T-cell (primary cell): ENCODE measurements at regions of chr18 and their contacts with region 1.

Region 1: DNA sequence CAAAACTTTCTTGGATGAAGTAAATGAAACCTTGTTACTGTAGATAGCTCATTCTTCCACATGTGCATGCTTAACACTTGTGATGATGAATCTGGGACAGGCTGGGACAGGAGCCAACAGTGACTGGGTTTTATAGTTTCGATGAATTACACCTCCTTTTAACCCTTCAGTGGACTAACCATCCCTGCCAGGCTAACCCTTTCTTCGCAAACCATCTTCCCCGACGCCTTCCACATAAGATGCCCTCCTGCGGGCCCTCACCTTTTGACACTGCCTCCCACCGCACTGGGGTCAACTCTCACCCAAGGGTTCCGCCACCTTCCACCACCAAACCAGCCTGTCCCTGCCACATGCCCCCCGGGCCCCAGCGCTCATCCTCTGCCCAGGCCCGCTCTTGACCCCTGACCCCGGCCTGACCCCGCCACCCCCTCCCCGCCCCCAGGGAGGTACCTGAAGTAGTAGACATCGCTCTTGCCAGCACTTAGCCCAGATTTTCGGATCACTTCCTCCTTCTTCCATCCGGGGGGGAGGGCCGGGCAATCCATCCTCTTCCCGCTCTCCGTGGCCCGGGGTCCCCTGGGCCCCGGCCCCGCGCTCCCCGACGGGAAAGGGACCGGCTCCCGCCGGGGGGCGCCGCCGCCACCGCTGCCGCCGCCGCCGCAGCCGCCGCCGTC is 764 bp downstream of the MBD2 start:
- DNase-seq: peak in 33 of 35 experiments; percentile 7 to 68 (median 31)
- ATAC-seq: peak; percentile 4 to 19 (median 8)
- H3K4me3 ChIP-seq: peak overlapping the region; percentile 54
- H3K4me3 Mint-ChIP-seq: peak overlapping the region; percentile 91 to 94 (median 92)
- H3K27ac ChIP-seq: peak overlapping the region; percentile 65
- H3K27ac Mint-ChIP-seq: peak overlapping the region; percentile 90 to 91
- H3K4me1 ChIP-seq: peaks cover 15 to 28% of the 10 kb centered on the region in 2 experiments
- H3K4me1 Mint-ChIP-seq: peaks cover 44 to 51% (median 46%) of the 10 kb centered on the region in 3 donors
- H3K27me3 ChIP-seq: no peaks in the 10 kb centered on the region
- H3K27me3 Mint-ChIP-seq: no peaks in the 10 kb centered on the region

Region 2: GRCh38 chr18:54209471-54210180 is 14.1 kb before region 1 on chr18:
- CTCF ChIA-PET with region 1: interaction called, 4 to 11 read pairs
- POLR2A ChIA-PET with region 1: interaction called, 4 to 10 read pairs
- DNase-seq: no peak
- ATAC-seq: no peak
- H3K4me3 ChIP-seq: no peak overlapping the region
- H3K4me3 Mint-ChIP-seq: no peak overlapping the region
- H3K27ac ChIP-seq: no peak overlapping the region
- H3K27ac Mint-ChIP-seq: peak overlapping the region; percentile 11 to 47
- H3K4me1 ChIP-seq: peaks cover 5 to 7% of the 10 kb centered on the region in 2 experiments
- H3K4me1 Mint-ChIP-seq: peaks cover 64 to 69% (median 65%) of the 10 kb centered on the region in 3 donors
- H3K27me3 ChIP-seq: no peaks in the 10 kb centered on the region
- H3K27me3 Mint-ChIP-seq: no peaks in the 10 kb centered on the region

Region 3: DNA sequence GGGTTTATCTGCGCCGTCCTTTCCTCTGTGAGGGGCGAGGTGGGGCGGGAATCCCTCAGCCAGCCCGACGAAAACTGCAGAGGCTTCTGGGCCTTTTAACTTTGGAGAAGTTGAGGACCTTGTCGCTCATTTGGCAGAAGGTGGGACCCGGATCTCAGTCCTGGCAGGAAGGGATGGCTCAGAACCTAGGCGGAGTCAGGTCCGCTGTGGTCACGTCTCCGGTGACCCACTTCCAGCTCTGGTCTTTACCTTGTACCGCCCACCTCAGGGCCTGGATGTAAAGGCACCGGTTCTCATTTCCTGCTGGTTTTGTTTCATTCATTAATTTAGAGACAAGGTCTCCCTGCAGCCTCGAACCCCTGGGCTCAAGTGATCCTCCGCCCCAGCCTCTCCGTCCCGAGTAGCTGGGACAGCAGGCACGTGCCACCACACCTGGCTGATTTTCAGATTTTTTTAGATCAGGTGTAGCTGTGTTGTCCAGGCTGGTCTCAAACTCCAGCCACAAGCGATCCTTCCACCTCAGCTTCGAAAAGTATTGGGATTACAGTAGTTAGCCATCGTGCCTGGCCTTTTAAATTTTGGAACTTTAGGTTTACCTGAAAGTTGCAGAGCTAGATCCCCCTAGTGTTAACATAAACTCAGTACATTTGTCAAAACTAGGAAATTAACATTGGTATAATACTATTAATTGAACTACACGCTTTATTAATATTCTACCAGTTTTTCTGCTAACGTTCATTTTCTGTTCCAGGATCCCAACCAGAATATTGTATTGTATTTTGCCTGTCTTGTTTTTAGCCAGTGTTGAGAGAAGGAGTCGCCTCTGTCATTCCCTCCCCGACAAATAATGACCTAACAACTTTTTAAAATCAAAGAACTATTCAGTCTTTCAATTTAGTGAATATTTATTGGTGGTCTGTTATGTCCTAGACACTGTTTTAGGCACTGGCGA is 46.5 kb after region 1 on chr18:
- CTCF ChIA-PET with region 1: interaction called, 26 to 89 read pairs
- POLR2A ChIA-PET with region 1: interaction called, 3 to 10 read pairs
- DNase-seq: peak in 10 of 35 experiments; percentile 7 to 55 (median 14)
- ATAC-seq: peak; percentile 7 to 46 (median 41)
- H3K4me3 ChIP-seq: peak overlapping the region; percentile 86
- H3K4me3 Mint-ChIP-seq: peak overlapping the region; percentile 90 to 96 (median 92)
- H3K27ac ChIP-seq: peak overlapping the region; percentile 92
- H3K27ac Mint-ChIP-seq: peak overlapping the region; percentile 98
- H3K4me1 ChIP-seq: peaks cover 6 to 20% of the 10 kb centered on the region in 2 experiments
- H3K4me1 Mint-ChIP-seq: peaks cover 22 to 30% (median 23%) of the 10 kb centered on the region in 3 donors
- H3K27me3 ChIP-seq: no peaks in the 10 kb centered on the region
- H3K27me3 Mint-ChIP-seq: no peaks in the 10 kb centered on the region

Region 4: DNA sequence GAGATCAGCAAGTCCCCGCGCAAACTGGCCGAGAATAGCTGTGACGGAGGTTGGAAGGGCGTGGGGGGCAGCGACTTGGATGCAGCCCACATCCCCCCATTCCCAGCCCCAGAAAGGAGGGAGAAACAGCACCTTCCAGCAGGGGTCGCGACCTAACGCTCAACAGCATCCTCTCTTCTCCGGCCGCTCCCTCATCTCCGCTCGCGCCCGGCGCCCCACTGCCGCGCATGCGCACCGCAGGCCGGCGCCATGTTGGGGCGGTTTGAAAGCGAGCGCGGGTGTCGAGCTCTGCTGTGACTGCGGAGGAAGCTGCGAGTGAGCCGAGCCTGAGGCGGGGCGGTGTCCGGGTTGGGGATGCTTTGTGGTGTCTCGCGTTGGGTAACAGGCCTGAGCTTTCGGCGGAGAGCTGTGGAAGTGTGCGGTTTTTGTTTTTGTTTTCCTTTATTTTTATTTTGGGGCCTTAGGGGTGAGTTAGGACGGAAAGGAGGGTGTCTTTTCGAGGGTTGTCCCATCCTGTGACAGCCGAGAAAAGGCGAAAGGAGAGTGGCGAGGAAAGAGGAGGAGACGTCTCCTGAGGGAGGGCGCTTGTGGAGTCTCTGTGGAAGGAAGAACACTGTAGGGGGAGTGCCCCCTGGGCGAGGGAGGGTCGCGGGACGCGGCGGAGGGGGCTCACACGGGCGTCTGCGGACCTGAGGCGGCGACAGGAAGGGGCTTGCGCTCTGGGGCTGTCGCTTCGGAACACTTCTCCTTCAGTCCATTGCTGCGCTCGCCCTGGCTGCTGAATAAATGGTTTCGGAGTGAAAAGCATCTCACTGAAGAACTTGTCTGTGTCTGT is 134.2 kb after region 1 on chr18 and contains the starts of genes C18orf54 and STARD6:
- CTCF ChIA-PET with region 1: interaction called, 3 to 19 read pairs
- POLR2A ChIA-PET with region 1: interaction called in 1 of 2 experiments, 6 read pairs
- DNase-seq: peak; percentile 78 to 97 (median 86)
- ATAC-seq: peak; percentile 96 to 97 (median 96)
- H3K4me3 ChIP-seq: peak within 1 kb of the TSS; percentile 89 to 93
- H3K4me3 Mint-ChIP-seq: peak within 1 kb of the TSS; percentile 94 to 99 (median 95)
- H3K27ac ChIP-seq: peak within 1 kb of the TSS; percentile 70
- H3K27ac Mint-ChIP-seq: peak within 1 kb of the TSS; percentile 90 to 94
- H3K4me1 ChIP-seq: peaks cover 0 to 8% of the 10 kb centered on the region in 2 experiments
- H3K4me1 Mint-ChIP-seq: peaks cover 14 to 22% (median 20%) of the 10 kb centered on the region in 3 donors
- H3K27me3 ChIP-seq: peaks cover 0 to 4% of the 10 kb centered on the region in 2 experiments
- H3K27me3 Mint-ChIP-seq: peaks cover 0 to 4% of the 10 kb centered on the region in 2 donors
- total RNA-seq, gene C18orf54: 1.3 to 3.4 (median 2.7) TPM
- total RNA-seq, gene STARD6: not detected

Region 5: DNA sequence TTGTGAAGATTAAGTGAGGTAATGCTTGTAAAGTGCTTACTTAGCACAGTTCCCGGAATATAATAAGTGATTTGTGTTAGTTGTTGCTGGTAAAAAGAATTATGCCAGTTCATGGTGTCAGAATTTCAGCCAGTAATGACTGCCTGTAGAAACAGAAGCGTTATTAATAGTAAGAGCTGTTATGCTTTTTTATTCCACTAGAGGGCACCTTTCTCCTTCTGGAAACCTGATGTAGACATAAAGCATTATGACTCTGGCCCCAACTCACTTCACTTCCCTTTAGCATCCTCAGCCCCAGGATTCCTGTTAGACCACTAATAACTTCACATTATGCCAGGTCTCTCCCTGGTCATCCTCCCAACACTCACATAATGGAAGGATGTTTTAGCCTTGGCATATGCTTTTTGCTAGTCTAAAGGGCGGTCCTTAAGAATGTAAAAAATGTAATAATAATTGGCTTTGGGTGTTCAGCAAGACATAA is 168.9 kb after region 1 on chr18:
- CTCF ChIA-PET with region 1: interaction called in 1 of 2 experiments, 20 read pairs
- POLR2A ChIA-PET with region 1: no interaction called
- DNase-seq: peak in 1 of 35 experiments; percentile 72
- ATAC-seq: peak in 3 of 4 experiments; percentile 43 to 56 (median 55)
- H3K4me3 ChIP-seq: no peak overlapping the region
- H3K4me3 Mint-ChIP-seq: no peak overlapping the region
- H3K27ac ChIP-seq: no peak overlapping the region
- H3K27ac Mint-ChIP-seq: no peak overlapping the region
- H3K4me1 ChIP-seq: no peaks in the 10 kb centered on the region
- H3K4me1 Mint-ChIP-seq: peaks cover 0 to 12% (median 6%) of the 10 kb centered on the region in 3 donors
- H3K27me3 ChIP-seq: peaks cover 0 to 2% of the 10 kb centered on the region in 2 experiments
- H3K27me3 Mint-ChIP-seq: peaks cover 2 to 12% of the 10 kb centered on the region in 2 donors